Transverse colon (tissue), 4 donors: ENCODE measurements at regions of chr10 and their contacts with region 1.

Region 1: GRCh38 chr10:79068562-79069324 is at the start of gene ZMIZ1:
- DNase-seq: peak; percentile 91
- H3K4me3 ChIP-seq: peak within 1 kb of the TSS; percentile 64 to 97 (median 86)
- H3K27ac ChIP-seq: peak within 1 kb of the TSS; percentile 96 to 99 (median 98)
- H3K4me1 ChIP-seq: peaks cover 19 to 59% (median 47%) of the 10 kb centered on the region in 4 donors
- H3K27me3 ChIP-seq: no peaks in the 10 kb centered on the region
- CTCF ChIP-seq: peak in 1 of 5 experiments; percentile 17
- EP300 ChIP-seq: no peak
- POLR2A ChIP-seq: peak; percentile 57
- total RNA-seq, gene ZMIZ1: 32.0 to 108 (median 63.0) TPM

Region 2: GRCh38 chr10:78211561-78212051 is 857.1 kb before region 1 on chr10:
- in situ Hi-C with region 1: no loop called
- intact Hi-C with region 1: loop called (anchors 10 kb)
- DNase-seq: no peak
- H3K4me3 ChIP-seq: no peak overlapping the region
- H3K27ac ChIP-seq: peak overlapping the region in 1 of 4 donors; percentile 2
- H3K4me1 ChIP-seq: peaks cover 10 to 22% (median 12%) of the 10 kb centered on the region in 4 donors
- H3K27me3 ChIP-seq: no peaks in the 10 kb centered on the region
- CTCF ChIP-seq: peak; percentile 31 to 39 (median 34)
- EP300 ChIP-seq: no peak
- POLR2A ChIP-seq: no peak

Region 3: DNA sequence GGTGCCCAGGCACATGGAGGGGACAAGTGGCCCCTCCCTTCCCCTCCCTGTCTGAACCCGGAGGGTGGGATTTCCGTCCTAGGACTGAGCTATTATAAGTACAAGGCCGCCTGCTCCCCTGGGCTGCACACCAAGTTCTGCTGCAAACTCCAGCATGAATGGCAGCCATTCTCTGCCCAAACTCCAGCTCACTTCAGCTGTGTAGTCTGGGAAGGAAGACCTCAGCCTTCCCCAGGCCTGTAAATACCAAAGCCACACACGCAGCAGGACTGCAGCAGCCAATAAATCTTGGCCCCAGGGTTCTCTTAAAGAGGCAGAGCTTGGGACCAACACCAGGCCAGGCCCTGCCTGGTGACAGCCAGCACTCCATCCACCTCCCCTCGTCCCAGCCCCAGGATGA is 291.3 kb before region 1 on chr10:
- in situ Hi-C with region 1: no loop called
- intact Hi-C with region 1: loop called (anchors 10 kb)
- DNase-seq: peak; percentile 23
- H3K4me3 ChIP-seq: no peak overlapping the region
- H3K27ac ChIP-seq: peak overlapping the region; percentile 64 to 77 (median 73)
- H3K4me1 ChIP-seq: peaks cover 7 to 24% (median 16%) of the 10 kb centered on the region in 4 donors
- H3K27me3 ChIP-seq: no peaks in the 10 kb centered on the region
- CTCF ChIP-seq: no peak
- EP300 ChIP-seq: peak; percentile 34
- POLR2A ChIP-seq: no peak

Region 4: DNA sequence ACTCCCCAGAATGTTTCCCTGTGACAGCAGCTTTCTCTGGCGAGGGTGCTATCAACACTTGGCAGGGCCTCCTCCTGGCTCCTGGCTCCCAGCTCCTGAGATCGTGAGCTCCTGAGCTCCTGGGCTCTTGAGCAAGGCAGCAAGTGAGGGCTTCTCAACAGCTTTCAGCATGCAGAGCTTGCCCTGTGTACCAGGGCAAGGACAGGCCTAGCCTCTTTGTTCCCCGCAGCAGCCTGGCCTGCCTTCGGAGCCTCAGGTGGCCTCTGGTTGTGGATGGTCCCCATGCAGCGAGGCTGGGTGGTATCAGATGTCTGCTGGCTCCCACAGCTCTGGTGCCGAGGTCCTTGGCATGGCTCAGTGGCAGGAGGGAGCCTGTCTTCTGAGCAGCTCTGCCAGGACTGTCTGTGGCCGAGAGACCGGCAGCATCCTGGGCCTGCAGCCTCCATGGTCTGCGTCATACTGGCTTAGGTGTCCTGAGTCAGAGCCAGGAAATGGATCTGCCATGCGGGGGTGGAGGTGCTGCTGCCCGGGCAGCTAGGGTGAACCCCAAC is 44.2 kb after region 1 on chr10:
- in situ Hi-C with region 1: no loop called
- intact Hi-C with region 1: loop called (anchors 1 kb)
- DNase-seq: no peak
- H3K4me3 ChIP-seq: no peak overlapping the region
- H3K27ac ChIP-seq: peak overlapping the region; percentile 75 to 90 (median 81)
- H3K4me1 ChIP-seq: peaks cover 42 to 77% (median 50%) of the 10 kb centered on the region in 4 donors
- H3K27me3 ChIP-seq: no peaks in the 10 kb centered on the region
- CTCF ChIP-seq: no peak
- EP300 ChIP-seq: no peak
- POLR2A ChIP-seq: no peak

Region 5: DNA sequence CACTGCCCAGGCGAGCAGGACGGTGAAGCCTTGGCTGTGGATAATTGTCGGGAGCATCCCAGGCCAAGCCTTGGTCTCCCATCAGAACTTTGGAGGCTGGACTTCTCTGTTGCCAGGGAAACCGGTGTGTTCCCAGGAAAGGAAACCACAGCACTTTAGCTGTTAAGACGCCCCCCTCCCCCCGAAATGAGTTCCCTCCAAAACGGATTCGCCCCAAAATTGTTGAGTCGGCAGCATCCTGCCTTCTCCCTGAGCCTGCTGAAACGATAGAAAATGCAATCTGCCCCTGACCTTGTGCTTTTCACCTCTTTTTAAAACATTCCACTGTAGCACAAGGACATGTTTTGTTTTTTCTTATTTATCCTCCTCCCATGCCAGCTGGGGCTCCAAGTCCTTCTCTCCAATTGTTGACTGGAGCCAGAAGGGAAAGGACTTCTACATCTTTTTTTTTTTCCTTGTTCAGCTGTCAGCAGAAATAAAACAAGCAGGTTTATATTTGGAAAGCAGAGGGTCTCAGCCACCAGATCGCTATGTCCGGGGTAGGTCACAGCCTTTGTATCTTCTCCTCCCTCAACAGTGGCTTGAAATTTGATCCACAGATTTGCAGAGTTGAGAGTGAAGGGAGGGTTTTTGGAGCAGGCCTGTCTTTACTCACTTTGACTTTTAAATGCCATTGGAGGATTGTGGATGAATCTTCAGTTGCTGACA is 116.5 kb after region 1 on chr10:
- in situ Hi-C with region 1: loop called in 1 of 4 experiments (anchors 10 kb)
- intact Hi-C with region 1: loop called (anchors 5 kb)
- DNase-seq: no peak
- H3K4me3 ChIP-seq: no peak overlapping the region
- H3K27ac ChIP-seq: peak overlapping the region; percentile 54 to 85 (median 66)
- H3K4me1 ChIP-seq: peaks cover 43 to 84% (median 62%) of the 10 kb centered on the region in 4 donors
- H3K27me3 ChIP-seq: no peaks in the 10 kb centered on the region
- CTCF ChIP-seq: no peak
- EP300 ChIP-seq: no peak
- POLR2A ChIP-seq: no peak

Region 6: GRCh38 chr10:80966337-80966980 is 1897.7 kb after region 1 on chr10:
- in situ Hi-C with region 1: no loop called
- intact Hi-C with region 1: no loop called
- DNase-seq: no peak
- H3K4me3 ChIP-seq: no peak overlapping the region
- H3K27ac ChIP-seq: no peak overlapping the region
- H3K4me1 ChIP-seq: no peaks in the 10 kb centered on the region
- H3K27me3 ChIP-seq: no peaks in the 10 kb centered on the region
- CTCF ChIP-seq: no peak
- EP300 ChIP-seq: no peak
- POLR2A ChIP-seq: no peak